ENCODE measurements at regions of chr2 and their contacts with region 1.

Region 1: GRCh38 chr2:145752091-145752806 is 1232.3 kb upstream of the ZEB2 start:
- DNase-seq: peak; percentile 52 to 77 (median 70)
- H3K4me3 ChIP-seq: peak overlapping the region in 1 of 3 experiments; percentile 41
- H3K4me3 Mint-ChIP-seq: peak overlapping the region; percentile 28 to 67
- H3K27ac ChIP-seq: peak overlapping the region; percentile 53 to 90
- H3K27ac Mint-ChIP-seq: peak overlapping the region; percentile 78 to 97 (median 92)
- H3K4me1 ChIP-seq: peaks cover 30 to 34% of the 10 kb centered on the region in 2 donors
- H3K4me1 Mint-ChIP-seq: peaks cover 32% of the 10 kb centered on the region
- H3K27me3 ChIP-seq: no peaks in the 10 kb centered on the region
- H3K27me3 Mint-ChIP-seq: peaks cover 0 to 2% (median 0%) of the 10 kb centered on the region in 3 donors
- CTCF ChIP-seq: peak; percentile 78

Region 2: DNA sequence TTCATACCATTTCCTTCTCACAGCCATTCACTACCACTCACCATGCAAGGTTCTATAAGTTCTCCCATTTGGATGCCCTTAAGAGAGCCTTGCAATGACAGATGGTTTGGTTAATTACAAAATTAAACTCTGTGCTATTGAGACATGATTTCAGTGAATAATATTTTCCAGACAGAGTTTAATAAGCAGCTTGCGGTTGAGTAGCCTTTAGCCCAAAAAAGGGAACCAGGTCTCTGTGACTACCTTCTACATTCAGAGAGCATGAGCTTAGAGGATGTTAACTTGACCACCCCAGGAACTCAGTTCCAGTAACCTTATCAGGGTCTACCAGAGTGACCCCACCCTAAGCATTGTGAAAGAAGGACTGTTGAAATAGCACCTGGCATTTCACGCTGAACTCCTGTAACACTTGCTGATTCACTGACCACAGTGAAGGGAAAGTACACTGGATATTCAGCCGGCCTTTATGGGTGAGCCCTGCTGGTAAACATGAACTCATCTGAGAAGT is 59.2 kb before region 1 on chr2:
- intact Hi-C with region 1: loop called (anchors 2 to 5 kb)
- DNase-seq: peak; percentile 92 to 97 (median 96)
- H3K4me3 ChIP-seq: no peak overlapping the region
- H3K4me3 Mint-ChIP-seq: no peak overlapping the region
- H3K27ac ChIP-seq: peak overlapping the region in 1 of 2 donors; percentile 39
- H3K27ac Mint-ChIP-seq: peak overlapping the region; percentile 58 to 84 (median 76)
- H3K4me1 ChIP-seq: peaks cover 5 to 17% of the 10 kb centered on the region in 2 donors
- H3K4me1 Mint-ChIP-seq: peaks cover 12% of the 10 kb centered on the region
- H3K27me3 ChIP-seq: no peaks in the 10 kb centered on the region
- H3K27me3 Mint-ChIP-seq: no peaks in the 10 kb centered on the region
- CTCF ChIP-seq: no peak